ENCODE measurements at regions of chr10 and their contacts with region 1.

Region 1: DNA sequence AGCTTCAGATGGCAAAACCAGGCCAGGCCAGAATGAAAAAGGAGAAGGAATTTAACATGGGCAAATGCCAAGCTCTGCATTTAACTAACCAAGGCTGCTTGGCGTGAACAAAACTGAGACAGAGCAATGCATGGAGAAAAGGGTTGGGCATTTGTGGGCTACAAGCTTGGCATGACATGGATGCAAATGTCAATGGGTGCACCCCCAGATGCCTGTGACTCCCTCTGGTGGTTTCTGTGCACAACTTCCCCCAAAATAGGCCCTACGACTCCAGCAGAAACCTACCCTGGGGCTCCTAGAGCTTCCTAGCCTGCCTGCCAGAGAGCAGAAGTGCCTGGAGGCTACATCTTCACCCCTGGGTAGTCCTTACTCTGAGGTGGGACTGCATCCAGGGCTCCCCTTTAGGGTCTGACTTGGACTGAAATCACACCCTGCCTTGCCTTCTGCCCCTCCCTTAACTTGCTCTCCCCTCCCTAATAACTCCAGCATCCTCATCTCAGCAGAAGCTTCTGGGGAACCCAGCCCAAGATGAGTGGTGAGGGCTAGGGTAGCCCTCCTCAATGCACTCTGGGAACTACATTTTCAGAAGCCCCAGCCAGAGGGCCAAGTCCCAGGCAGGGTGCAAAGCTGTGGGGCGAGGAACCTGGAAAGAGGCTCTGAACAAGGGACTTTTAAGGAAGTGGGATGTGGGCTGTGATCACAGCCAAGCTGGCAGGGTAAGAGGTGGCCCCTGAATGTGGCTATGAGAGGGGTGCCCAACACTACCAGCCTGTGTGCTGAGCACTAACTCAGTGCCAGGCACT is 11.3 kb downstream of the GPRIN2 start:
- DNase-seq: peak; percentile 86 to 89
- ATAC-seq: peak; percentile 9 to 22; a peak in 4 of 6 replicates
- H3K4me3 ChIP-seq: no peak overlapping the region
- H3K27ac ChIP-seq: peak overlapping the region; percentile 89 to 97
- H3K4me1 ChIP-seq: peaks cover 92% of the 10 kb centered on the region
- CTCF ChIP-seq: peak; percentile 64
- EP300 ChIP-seq: no peak
- POLR2A ChIP-seq: no peak
- RAD21 ChIP-seq: peak in 1 of 2 experiments; percentile 70; a peak in 3 of 5 replicates

Region 2: GRCh38 chr10:46525177-46525823 is 19.9 kb before region 1 on chr10:
- CTCF ChIA-PET with region 1: interaction called, 67 read pairs
- POLR2A ChIA-PET with region 1: interaction called, 77 read pairs
- DNase-seq: peak; percentile 94 to 96
- ATAC-seq: peak; percentile 22 to 23; a peak in 5 of 6 replicates
- H3K4me3 ChIP-seq: no peak overlapping the region
- H3K27ac ChIP-seq: peak overlapping the region; percentile 92 to 95
- H3K4me1 ChIP-seq: peaks cover 81% of the 10 kb centered on the region
- CTCF ChIP-seq: no peak
- EP300 ChIP-seq: no peak
- POLR2A ChIP-seq: no peak
- RAD21 ChIP-seq: no peak

Region 3: GRCh38 chr10:46530249-46531186 is 14.7 kb before region 1 on chr10:
- CTCF ChIA-PET with region 1: interaction called, 67 read pairs
- POLR2A ChIA-PET with region 1: interaction called, 77 read pairs
- DNase-seq: peak; percentile 79 to 94
- ATAC-seq: peak; percentile 65 to 70
- H3K4me3 ChIP-seq: no peak overlapping the region
- H3K27ac ChIP-seq: peak overlapping the region; percentile 92 to 95
- H3K4me1 ChIP-seq: peaks cover 68% of the 10 kb centered on the region
- CTCF ChIP-seq: no peak
- EP300 ChIP-seq: peak; percentile 84 to 88; a peak in 3 of 5 replicates
- POLR2A ChIP-seq: no peak
- RAD21 ChIP-seq: no peak

Region 4: DNA sequence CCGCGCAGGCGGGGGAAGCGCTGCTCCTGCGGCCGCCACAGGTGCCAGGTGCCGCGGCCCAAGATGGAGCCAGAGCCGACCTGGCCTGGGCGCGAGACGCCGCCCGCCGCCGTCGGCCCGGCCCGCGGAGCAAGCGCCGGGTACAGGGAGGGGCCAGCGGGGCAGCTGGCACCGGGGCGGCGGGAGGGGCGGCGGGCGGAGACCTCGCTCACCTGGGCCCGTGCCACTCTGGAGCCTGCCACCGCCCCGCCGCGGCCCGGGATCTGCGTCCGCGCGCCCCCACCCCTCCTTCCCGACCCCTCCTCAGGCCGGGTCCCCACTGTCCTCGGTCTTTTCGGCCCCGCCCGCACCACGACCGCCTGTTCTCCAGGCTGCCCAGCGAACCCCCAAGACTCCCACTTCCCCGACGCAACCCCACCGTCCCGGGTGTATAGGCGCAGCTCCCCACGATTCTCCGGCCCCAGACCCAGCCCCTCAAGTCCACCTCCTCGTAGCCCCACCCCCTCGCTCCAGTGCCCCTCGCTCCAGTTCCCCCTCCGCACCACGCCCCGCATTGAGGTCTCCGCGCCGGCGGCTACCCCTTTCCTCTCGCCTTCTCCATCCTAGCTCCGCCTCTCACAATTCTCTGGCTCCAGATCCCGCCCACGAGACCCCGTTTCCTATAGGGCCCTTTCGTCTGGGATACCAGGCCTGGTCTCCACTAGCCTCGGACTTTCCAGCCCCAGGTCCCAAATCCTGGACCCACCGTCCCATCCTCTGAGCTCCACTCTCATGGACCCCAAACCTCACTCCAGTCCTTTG is 11.5 kb after region 1 on chr10 and contains the start of gene GPRIN2:
- CTCF ChIA-PET with region 1: interaction called, 87 read pairs
- POLR2A ChIA-PET with region 1: interaction called, 7 read pairs
- DNase-seq: peak in 1 of 2 experiments; percentile 28
- ATAC-seq: peak; percentile 32 to 42
- H3K4me3 ChIP-seq: peak within 1 kb of the TSS; percentile 70
- H3K27ac ChIP-seq: peak within 1 kb of the TSS; percentile 88 to 89
- H3K4me1 ChIP-seq: peaks cover 60% of the 10 kb centered on the region
- CTCF ChIP-seq: no peak
- EP300 ChIP-seq: no peak
- POLR2A ChIP-seq: no peak
- RAD21 ChIP-seq: no peak
- polyA plus RNA-seq, gene GPRIN2: 8.8 and 9.4 TPM in 2 replicates